Common myeloid progenitor, CD34-positive (primary cell): ENCODE measurements at regions of chr3 and their contacts with region 1.

Region 1: DNA sequence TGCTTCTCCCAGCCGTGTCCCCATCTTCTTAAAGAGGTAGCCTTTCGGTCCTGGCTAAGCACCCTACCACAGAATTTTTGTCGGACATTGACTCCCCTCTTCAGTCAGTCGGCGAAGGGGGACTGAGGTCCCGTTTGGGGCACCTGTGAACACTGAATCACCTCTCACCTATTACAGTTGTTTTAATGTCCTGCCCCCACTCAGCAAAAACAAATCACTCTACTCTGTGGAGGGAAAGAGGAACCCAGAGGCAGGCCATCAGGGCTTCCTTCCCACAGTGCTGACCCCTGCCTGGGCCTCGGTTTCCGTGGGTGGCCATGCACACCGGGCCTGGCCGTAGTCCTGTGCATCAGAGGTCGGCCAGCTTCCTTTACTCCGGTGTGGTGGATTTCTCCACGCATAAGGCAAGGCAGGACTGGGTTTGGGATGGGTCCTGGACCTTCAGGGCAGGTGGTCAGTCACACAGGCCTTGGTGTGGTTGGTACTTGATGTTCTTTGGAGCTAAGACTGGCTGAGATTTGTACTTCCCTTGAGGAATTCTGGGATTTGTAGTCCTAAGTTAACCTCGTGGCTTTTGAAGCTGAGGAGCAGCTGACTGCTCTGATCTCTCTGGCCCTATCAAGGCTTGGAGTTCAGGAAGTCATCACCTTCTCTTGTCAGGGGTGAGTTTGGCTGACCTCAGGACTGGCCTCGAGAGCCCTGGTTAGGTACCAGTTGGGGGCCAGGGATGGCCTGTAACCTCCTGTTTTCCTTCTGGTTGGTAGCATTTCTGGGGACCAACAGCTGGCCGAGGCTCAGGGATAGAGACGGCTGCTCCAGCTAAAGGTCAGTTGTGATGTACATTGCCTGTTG is 627 bp upstream of the FAM131A start:
- DNase-seq: peak in 1 of 3 donors; percentile 46
- H3K4me3 ChIP-seq: peak overlapping the region; percentile 43 to 88 (median 73)
- H3K27ac ChIP-seq: peak overlapping the region in 1 of 2 experiments; percentile 84
- H3K4me1 ChIP-seq: peaks cover 1 to 32% (median 22%) of the 10 kb centered on the region in 4 experiments
- H3K27me3 ChIP-seq: no peaks in the 10 kb centered on the region

Region 2: DNA sequence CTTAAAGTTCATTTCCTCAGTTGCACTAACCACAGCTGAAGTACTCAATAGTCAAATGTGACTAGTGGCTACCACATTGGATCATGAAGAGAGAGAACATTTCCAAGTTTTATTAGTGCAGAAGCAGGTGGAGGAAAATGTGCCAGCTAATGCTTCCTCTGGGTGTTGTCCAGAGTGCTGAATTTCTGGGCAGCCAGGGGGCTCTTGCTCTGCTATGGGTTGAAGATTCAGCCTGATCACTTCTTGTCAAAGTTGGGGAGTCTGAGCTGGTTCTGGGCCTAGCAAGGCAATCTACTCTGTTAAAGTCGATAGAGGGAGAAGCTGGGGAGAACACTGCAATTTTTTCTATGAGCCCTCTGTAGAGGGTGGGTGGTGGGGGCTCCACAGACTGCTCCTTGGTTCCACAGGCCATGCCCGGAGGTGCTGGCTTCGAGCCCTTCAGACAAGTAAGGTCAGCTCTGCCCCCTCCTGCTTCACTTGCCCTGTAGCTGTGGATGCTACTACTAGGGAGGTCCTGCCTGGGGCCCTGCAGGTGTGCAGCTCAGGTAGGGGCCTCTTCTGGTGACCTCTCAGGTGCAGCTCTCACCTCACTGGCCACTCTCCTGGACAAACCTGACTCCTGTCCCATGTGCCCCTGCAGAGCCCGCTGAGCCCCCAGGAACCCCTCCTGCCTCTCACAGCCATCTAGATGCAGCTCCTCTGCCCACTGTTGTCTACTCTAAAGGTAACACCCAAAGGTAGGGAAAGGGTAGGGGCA is 96.2 kb before region 1 on chr3:
- CTCF ChIA-PET with region 1: no interaction called
- POLR2A ChIA-PET with region 1: no interaction called
- DNase-seq: peak in 2 of 3 donors; percentile 56 to 62
- H3K4me3 ChIP-seq: no peak overlapping the region
- H3K27ac ChIP-seq: no peak overlapping the region
- H3K4me1 ChIP-seq: peaks cover 0 to 6% (median 3%) of the 10 kb centered on the region in 4 experiments
- H3K27me3 ChIP-seq: no peaks in the 10 kb centered on the region

Region 3: DNA sequence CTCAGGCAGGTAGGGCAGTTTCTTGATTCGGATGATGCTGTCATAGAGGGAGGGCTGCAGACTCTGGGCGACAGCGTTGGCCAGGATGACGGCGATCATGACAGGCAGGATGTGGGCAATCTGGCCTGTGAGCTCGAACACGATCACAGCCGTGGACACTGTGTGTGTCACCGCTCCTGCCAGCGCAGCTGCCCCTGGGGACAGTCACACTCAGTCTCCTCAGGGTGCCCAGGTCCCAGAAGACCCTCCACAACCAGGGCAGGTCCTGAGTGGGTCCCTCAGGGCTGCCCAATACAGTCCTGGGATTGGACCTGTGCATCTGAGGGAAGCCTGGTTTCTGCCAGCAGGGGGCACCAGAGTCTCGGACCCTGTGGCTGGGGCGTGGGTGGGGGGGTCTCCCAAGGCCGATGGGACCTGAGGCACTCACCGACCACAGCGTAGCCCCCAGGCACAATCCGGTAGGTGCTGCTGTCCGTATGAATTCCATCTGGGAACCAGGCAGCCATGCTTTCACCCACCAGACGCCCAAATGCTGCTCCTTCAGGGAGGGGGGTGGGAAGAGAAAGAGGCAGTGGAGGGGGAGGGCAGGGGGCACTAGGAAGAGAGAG is 17.5 kb after region 1 on chr3:
- CTCF ChIA-PET with region 1: interaction called, 29 read pairs
- POLR2A ChIA-PET with region 1: no interaction called
- DNase-seq: peak in 2 of 3 donors; percentile 56 to 64
- H3K4me3 ChIP-seq: no peak overlapping the region
- H3K27ac ChIP-seq: no peak overlapping the region
- H3K4me1 ChIP-seq: no peaks in the 10 kb centered on the region
- H3K27me3 ChIP-seq: no peaks in the 10 kb centered on the region